Sigmoid colon (tissue), 7 donors: ENCODE measurements at regions of chr17 and their contacts with region 1.

Region 1: GRCh38 chr17:27892866-27893769 is at the start of gene LYRM9:
- DNase-seq: peak; percentile 94
- H3K4me3 ChIP-seq: peak within 1 kb of the TSS; percentile 82 to 88 (median 84)
- H3K27ac ChIP-seq: peak within 1 kb of the TSS; percentile 83 to 93 (median 89)
- H3K4me1 ChIP-seq: peaks cover 0 to 12% (median 9%) of the 10 kb centered on the region in 4 donors
- H3K27me3 ChIP-seq: peaks cover 0 to 15% (median 0%) of the 10 kb centered on the region in 3 donors
- CTCF ChIP-seq: peak; percentile 62 to 88 (median 70)
- EP300 ChIP-seq: no peak
- POLR2A ChIP-seq: no peak
- total RNA-seq, gene LYRM9: 15.5 to 27.1 (median 19.7) TPM

Region 2: DNA sequence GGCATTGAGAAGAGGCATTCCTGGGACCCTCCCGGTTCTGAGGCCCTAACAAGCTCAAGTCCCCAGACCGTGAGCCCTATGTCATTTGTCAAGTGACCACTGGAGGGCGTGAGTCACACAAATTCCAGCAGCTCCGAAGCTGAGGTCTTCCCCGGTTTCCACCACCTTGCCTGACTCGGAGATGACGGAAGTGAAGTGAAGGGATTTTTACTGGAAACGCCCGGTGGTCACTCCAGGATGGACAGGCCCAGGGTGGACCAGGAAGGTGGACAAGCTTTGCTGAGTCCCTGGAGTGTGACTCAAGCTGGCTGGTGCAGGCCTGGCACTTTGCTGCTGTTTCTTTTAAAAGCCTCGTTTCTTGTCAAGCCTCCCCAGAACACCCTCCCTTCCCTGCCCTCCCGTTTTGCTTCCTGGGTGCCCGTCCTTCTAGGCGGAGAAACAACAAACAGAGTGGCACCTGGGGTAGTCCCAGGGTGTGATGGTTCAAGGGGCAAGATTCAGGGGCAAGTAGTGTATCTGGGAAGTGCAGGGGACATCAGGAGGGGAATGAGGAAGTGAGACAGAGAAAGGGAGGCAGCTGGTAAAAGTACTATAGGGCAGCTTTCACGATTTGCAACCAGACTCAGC is 87.5 kb before region 1 on chr17:
- intact Hi-C with region 1: loop called (anchors 1 kb)
- DNase-seq: peak; percentile 89
- H3K4me3 ChIP-seq: peak overlapping the region in 3 of 4 donors; percentile 31 to 43 (median 40)
- H3K27ac ChIP-seq: peak overlapping the region in 3 of 4 donors; percentile 13 to 38 (median 30)
- H3K4me1 ChIP-seq: peaks cover 0 to 6% (median 3%) of the 10 kb centered on the region in 4 donors
- H3K27me3 ChIP-seq: no peaks in the 10 kb centered on the region
- CTCF ChIP-seq: peak; percentile 75 to 86 (median 78)
- EP300 ChIP-seq: no peak
- POLR2A ChIP-seq: no peak

Region 3: DNA sequence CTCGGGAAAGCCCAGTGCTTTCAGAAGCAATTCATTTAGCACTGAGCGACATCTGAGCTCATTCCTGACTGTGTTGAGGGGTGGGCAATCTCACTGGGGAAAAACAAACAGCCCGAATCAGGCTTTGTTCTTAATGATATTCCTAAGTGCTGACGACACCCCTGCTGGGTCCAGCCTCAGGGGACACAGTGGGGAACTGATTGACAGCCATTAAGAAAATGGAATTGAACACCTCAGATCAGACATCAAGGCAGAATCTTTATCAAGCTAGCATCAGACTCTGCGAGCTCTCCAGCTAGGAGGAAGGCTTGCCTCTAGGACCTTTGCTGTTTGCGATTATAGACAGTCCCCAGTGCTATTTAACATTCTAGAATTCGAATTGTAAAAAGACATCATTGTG is 22.6 kb after region 1 on chr17:
- intact Hi-C with region 1: no loop called
- DNase-seq: no peak
- H3K4me3 ChIP-seq: no peak overlapping the region
- H3K27ac ChIP-seq: no peak overlapping the region
- H3K4me1 ChIP-seq: no peaks in the 10 kb centered on the region
- H3K27me3 ChIP-seq: no peaks in the 10 kb centered on the region
- CTCF ChIP-seq: no peak
- EP300 ChIP-seq: no peak
- POLR2A ChIP-seq: no peak

Region 4: DNA sequence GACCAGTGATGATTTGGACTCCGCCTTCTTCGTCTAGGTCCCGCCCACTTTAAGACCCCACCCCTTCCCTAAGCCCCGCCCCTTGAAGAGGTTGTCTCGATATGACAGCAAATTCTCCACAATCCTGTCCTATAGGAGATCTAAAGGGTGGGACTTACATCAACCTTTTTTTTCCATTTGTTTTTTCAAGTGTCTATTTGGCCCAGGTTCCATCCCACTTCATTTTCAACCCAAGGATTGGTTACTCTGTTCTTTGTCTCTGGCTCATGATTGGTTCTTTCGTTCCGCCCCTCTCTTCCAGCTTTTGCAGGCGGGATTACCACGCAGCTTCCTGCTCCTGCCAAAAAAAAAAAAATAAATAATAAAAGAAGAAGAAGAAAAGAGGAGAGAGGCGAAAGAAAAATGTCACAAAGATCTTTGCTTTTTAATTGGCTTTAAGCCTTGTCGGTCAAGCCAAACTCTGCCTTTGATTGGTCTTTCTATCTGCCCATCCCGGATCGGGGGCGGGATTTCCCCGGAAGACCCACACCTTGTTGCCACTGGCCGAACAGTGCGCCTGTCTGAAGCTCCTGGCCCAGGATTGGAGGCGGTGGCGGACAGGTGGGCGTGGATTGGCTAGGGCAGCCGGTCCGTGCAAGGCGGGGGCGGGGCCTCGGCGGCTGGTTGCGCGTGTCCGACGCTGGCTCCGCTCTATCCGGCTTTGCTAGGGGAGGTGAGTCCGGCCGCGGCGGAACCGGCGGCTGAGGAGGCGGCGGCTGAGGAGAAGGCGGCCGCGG is 148.1 kb after region 1 on chr17:
- intact Hi-C with region 1: loop called (anchors 2 kb)
- DNase-seq: peak; percentile 100
- H3K4me3 ChIP-seq: peak overlapping the region; percentile 89 to 98 (median 97)
- H3K27ac ChIP-seq: peak overlapping the region; percentile 92 to 97 (median 94)
- H3K4me1 ChIP-seq: peaks cover 0 to 41% (median 27%) of the 10 kb centered on the region in 4 donors
- H3K27me3 ChIP-seq: no peaks in the 10 kb centered on the region
- CTCF ChIP-seq: no peak
- EP300 ChIP-seq: no peak
- POLR2A ChIP-seq: peak in 1 of 2 donors; percentile 44

Region 5: DNA sequence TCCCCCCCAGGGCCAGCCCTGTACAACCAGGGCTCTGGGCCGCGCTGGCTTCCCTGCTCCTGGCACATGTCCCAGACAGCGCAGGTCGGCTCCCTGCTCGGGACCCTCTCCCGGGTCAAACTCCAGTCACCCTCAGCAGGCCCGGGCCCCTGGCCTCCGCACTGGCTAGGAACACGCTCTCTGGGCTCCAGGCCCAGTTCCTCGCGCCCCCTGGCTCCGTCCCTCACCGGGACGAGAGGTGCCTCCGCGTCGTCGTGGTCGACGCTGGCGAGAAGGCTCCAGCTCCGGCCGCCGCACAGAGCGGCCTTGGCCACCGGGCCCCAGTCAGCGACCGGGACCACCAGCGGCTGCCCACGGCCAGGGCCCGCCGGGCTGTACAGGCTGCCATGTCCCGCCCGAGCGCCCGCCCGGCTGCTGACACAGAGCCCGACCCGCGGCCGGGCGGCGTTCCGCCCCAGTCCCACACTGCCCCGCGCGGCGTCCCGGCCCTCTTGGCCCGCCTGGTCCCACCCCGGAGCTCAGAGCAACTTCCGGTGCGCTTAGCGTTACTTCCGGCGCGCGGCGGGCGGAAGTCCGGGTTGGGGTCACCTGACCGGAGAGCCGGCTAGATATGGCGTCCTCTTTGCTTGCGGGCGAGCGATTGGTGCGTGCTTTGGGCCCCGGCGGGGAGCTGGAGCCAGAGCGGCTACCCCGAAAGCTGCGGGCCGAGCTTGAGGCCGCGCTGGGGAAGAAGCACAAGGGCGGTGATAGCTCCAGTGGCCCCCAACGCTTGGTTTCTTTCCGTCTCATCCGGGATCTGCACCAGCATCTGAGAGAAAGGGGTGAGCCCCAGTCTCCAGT is 464.2 kb after region 1 on chr17 and contains the start of gene POLDIP2:
- intact Hi-C with region 1: loop called (anchors 10 kb)
- DNase-seq: peak; percentile 98
- H3K4me3 ChIP-seq: peak within 1 kb of the TSS; percentile 69 to 99 (median 89)
- H3K27ac ChIP-seq: peak within 1 kb of the TSS; percentile 85 to 97 (median 92)
- H3K4me1 ChIP-seq: peaks cover 0 to 33% (median 26%) of the 10 kb centered on the region in 4 donors
- H3K27me3 ChIP-seq: no peaks in the 10 kb centered on the region
- CTCF ChIP-seq: no peak
- EP300 ChIP-seq: peak in 1 of 4 donors; percentile 70
- POLR2A ChIP-seq: peak; percentile 67 to 71
- total RNA-seq, gene POLDIP2: 55.8 to 65.6 (median 59.3) TPM